ENCODE measurements at regions of chr1 and their contacts with region 1.

Region 1: DNA sequence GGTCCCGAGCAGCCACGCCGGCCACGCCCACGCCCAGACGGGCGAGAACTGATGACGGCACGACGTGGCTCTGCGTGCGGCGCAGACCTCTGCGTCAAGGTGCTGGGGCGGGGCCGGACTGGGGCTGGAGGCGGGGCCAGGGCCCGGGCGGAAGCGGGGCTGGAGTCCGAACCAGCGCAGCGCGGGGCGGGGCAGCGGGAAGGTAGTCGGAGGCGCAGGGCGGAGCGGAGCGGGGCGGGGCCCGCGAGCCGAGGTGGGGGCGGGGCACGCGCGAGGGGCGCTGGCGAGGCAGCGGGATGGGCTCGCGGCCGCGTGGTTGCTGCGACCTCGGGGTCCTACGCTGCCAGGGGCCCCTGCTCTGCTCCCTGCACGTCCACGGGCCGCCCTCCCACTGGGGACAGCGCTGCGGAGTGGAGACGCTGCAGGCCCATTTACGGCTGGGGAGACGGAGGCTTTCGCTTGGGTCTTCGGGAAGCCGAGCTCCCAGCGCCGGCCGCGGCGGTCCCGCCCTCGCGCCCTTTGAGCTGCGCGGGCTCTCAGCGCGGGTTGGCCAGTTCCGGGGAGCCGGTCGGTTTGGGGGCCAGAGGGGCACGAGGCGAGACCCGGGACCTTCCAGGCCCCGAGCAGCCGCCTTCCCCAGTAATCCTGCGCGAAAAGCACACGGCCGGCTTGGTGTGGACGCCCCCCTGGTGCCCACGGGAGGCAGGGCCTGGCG is at the start of gene PEX10:
- DNase-seq: peak; percentile 99
- ATAC-seq: peak; percentile 85
- H3K4me3 Mint-ChIP-seq: peak within 1 kb of the TSS; percentile 90
- H3K27ac Mint-ChIP-seq: peak within 1 kb of the TSS; percentile 94
- H3K4me1 Mint-ChIP-seq: peaks cover 45% of the 10 kb centered on the region
- H3K27me3 Mint-ChIP-seq: no peaks in the 10 kb centered on the region
- total RNA-seq, gene PEX10: 10.3 to 12.3 TPM

Region 2: GRCh38 chr1:2391041-2391930 is 21.4 kb before region 1 on chr1 and contains the starts of genes MORN1 and RER1:
- CTCF ChIA-PET with region 1: interaction called, 3 read pairs
- POLR2A ChIA-PET with region 1: interaction called, 11 read pairs
- DNase-seq: peak; percentile 99
- ATAC-seq: peak; percentile 98
- H3K4me3 Mint-ChIP-seq: peak within 1 kb of the TSS; percentile 92
- H3K27ac Mint-ChIP-seq: peak within 1 kb of the TSS; percentile 92
- H3K4me1 Mint-ChIP-seq: peaks cover 40% of the 10 kb centered on the region
- H3K27me3 Mint-ChIP-seq: no peaks in the 10 kb centered on the region
- total RNA-seq, gene MORN1: 6.2 to 7.9 TPM
- total RNA-seq, gene RER1: 148 to 151 TPM

Region 3: DNA sequence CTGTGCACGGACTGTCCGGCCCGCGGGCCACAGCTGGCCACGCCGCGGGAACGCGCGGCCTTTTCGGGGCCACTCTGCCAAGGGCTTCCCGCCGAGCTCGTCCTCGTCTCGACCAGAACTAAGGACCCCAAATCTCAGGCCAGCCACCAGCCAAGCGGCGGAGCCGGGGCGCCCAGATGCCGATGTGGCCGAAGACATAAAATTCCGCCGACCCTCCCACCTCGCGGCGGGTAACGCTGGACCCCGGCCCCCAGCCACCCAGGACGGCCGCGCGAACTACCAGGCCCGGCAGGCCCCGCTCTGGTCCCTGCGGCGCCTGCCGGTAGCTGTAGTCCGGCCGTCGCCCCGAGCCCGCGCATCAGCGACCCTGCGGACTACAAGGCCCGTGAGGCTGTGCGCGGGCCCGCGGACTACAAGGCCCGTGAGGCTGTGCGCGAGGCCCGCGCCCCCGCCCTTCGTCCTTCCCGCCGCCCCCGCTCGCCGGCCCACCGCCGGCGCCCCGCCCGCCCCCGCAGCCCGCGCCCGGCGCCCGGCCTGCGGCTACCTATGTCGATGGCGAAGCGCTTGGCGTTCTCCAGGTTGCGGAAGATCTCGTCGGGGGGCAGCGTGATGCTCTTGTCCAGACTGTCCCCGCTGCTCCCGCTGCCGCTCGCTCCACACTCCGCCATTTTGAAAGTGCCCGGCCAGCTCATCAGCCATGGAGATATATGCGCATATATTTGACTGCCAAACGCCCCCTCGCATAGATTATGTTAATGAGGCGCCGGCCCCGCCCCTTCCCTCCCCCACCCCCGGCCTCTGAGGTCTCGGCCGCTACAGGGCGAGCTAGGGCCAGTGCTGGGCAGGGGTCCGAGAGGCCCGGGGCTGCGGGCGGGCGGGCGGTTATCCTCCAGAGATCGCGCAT is 113.5 kb after region 1 on chr1 and contains the start of gene PANK4:
- CTCF ChIA-PET with region 1: interaction called, 34 read pairs
- POLR2A ChIA-PET with region 1: interaction called, 10 read pairs
- DNase-seq: peak; percentile 93
- ATAC-seq: peak; percentile 89
- H3K4me3 Mint-ChIP-seq: peak within 1 kb of the TSS; percentile 81
- H3K27ac Mint-ChIP-seq: peak within 1 kb of the TSS; percentile 94
- H3K4me1 Mint-ChIP-seq: peaks cover 49% of the 10 kb centered on the region
- H3K27me3 Mint-ChIP-seq: peaks cover 19% of the 10 kb centered on the region
- total RNA-seq, gene PANK4: 55.9 to 66.8 TPM

Region 4: DNA sequence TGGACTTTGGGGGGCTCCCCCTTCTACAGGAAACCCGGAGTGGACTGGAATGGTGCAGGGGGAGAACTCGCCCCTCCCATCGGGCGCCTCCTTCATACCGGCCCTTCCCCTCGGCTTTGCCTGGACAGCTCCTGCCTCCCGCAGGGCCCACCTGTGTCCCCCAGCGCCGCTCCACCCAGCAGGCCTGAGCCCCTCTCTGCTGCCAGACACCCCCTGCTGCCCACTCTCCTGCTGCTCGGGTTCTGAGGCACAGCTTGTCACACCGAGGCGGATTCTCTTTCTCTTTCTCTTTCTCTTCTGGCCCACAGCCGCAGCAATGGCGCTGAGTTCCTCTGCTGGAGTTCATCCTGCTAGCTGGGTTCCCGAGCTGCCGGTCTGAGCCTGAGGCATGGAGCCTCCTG is 143.6 kb after region 1 on chr1 and contains the start of gene TNFRSF14:
- CTCF ChIA-PET with region 1: interaction called, 13 read pairs
- POLR2A ChIA-PET with region 1: interaction called, 12 read pairs
- DNase-seq: peak; percentile 90
- ATAC-seq: peak; percentile 77
- H3K4me3 Mint-ChIP-seq: peak within 1 kb of the TSS; percentile 97
- H3K27ac Mint-ChIP-seq: peak within 1 kb of the TSS; percentile 98
- H3K4me1 Mint-ChIP-seq: peaks cover 46% of the 10 kb centered on the region
- H3K27me3 Mint-ChIP-seq: no peaks in the 10 kb centered on the region
- total RNA-seq, gene TNFRSF14: 85.8 to 86.5 TPM

Measured in activated CD8-positive, alpha-beta T cell treated with anti-CD3 and anti-CD28 coated beads, Interleukin-2, amount 10 ng/mL, durations not matched to agents 7 days and 5 days (primary cell).